Activated CD8-positive, alpha-beta T cell treated with anti-CD3 and anti-CD28 coated beads, Interleukin-2, amount 10 ng/mL, durations not matched to agents 7 days and 5 days (primary cell): ENCODE measurements at regions of chr2 and their contacts with region 1.

Region 1: GRCh38 chr2:134118279-134119116 is 135.4 kb upstream of the MGAT5 start:
- DNase-seq: peak; percentile 91
- ATAC-seq: peak; percentile 43
- H3K4me3 Mint-ChIP-seq: peak overlapping the region; percentile 98
- H3K27ac Mint-ChIP-seq: peak overlapping the region; percentile 4
- H3K4me1 Mint-ChIP-seq: peaks cover 36% of the 10 kb centered on the region
- H3K27me3 Mint-ChIP-seq: peaks cover 5% of the 10 kb centered on the region

Region 2: DNA sequence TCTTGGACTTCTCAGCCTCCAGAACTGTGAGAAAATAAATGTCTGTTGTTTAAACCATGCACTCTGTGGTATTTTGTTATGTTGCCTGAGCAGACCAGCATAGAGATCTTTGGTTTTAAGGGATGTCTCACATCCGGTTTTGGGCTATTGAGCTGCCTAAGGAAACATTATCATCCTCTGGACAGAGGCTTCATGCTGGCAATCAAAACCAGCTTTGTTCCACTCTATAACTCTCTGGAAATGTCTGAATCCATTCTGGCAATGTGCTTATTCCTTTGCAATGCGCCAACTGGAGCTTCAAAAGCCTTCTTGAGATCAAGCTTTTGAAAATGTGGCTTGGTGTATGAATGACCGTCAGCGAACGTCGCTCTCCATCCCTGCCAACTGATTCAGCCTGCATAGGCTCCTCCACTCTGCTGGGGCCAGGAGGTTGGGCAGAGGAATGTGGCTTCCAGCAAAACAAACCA is 48.2 kb before region 1 on chr2:
- CTCF ChIA-PET with region 1: no interaction called
- POLR2A ChIA-PET with region 1: no interaction called
- DNase-seq: no peak
- ATAC-seq: no peak
- H3K4me3 Mint-ChIP-seq: no peak overlapping the region
- H3K27ac Mint-ChIP-seq: no peak overlapping the region
- H3K4me1 Mint-ChIP-seq: no peaks in the 10 kb centered on the region
- H3K27me3 Mint-ChIP-seq: peaks cover 4% of the 10 kb centered on the region

Region 3: GRCh38 chr2:134080391-134081089 is 38.0 kb before region 1 on chr2:
- CTCF ChIA-PET with region 1: no interaction called
- POLR2A ChIA-PET with region 1: no interaction called
- DNase-seq: no peak
- ATAC-seq: no peak
- H3K4me3 Mint-ChIP-seq: no peak overlapping the region
- H3K27ac Mint-ChIP-seq: no peak overlapping the region
- H3K4me1 Mint-ChIP-seq: no peaks in the 10 kb centered on the region
- H3K27me3 Mint-ChIP-seq: peaks cover 9% of the 10 kb centered on the region

Region 4: GRCh38 chr2:134181210-134181609 is 62.7 kb after region 1 on chr2:
- CTCF ChIA-PET with region 1: interaction called, 11 read pairs
- POLR2A ChIA-PET with region 1: interaction called, 4 read pairs
- DNase-seq: peak; percentile 71
- ATAC-seq: peak; percentile 88
- H3K4me3 Mint-ChIP-seq: no peak overlapping the region
- H3K27ac Mint-ChIP-seq: peak overlapping the region; percentile 70
- H3K4me1 Mint-ChIP-seq: peaks cover 47% of the 10 kb centered on the region
- H3K27me3 Mint-ChIP-seq: no peaks in the 10 kb centered on the region

Region 5: DNA sequence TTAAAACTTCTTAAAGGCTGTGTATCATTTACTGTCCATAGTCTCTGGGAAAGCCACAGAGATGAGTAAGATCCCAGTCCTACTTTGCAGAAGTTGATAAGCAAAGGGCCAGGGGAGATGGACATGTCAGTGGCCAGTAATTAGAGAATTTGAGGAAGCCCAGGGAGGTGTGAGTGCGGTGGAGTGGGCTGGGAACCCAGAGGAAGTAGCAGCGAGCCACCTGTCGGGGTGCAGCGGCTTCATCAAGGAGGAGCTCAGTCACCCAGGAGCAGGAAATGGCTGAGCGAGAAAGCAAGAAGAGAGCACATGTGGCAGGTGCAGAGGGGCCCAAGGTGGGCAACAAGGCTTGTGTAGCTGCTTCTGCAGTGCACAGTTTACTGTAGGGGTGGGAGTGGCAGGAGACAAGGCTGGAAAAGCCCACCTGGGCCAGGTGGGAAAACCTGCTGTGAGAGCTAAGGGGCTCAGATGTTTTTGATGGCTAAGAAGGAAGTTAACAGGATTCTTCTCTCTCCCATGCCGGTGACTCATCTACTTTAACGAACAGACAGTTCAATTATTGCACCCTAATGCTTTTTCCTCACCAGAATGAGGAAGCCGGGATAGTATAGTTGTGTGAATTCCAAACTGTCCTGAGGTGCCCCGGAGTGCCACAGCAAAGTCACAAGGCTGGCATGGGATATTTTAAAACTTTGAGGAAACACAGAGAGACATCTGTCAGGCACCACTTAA is 100.6 kb after region 1 on chr2:
- CTCF ChIA-PET with region 1: interaction called, 40 read pairs
- POLR2A ChIA-PET with region 1: interaction called, 5 read pairs
- DNase-seq: peak; percentile 65
- ATAC-seq: peak; percentile 78
- H3K4me3 Mint-ChIP-seq: peak overlapping the region; percentile 40
- H3K27ac Mint-ChIP-seq: peak overlapping the region; percentile 85
- H3K4me1 Mint-ChIP-seq: peaks cover 49% of the 10 kb centered on the region
- H3K27me3 Mint-ChIP-seq: no peaks in the 10 kb centered on the region

Region 6: GRCh38 chr2:134253804-134254203 is 135.3 kb after region 1 on chr2 and contains the start of gene MGAT5:
- CTCF ChIA-PET with region 1: interaction called, 20 read pairs
- POLR2A ChIA-PET with region 1: no interaction called
- DNase-seq: no peak
- ATAC-seq: no peak
- H3K4me3 Mint-ChIP-seq: no peak within 1 kb of the TSS
- H3K27ac Mint-ChIP-seq: no peak within 1 kb of the TSS
- H3K4me1 Mint-ChIP-seq: peaks cover 93% of the 10 kb centered on the region
- H3K27me3 Mint-ChIP-seq: peaks cover 2% of the 10 kb centered on the region
- total RNA-seq, gene MGAT5: 48.5 to 54.3 TPM

Region 7: GRCh38 chr2:134402410-134402809 is 283.9 kb after region 1 on chr2:
- CTCF ChIA-PET with region 1: interaction called, 14 read pairs
- POLR2A ChIA-PET with region 1: no interaction called
- DNase-seq: no peak
- ATAC-seq: no peak
- H3K4me3 Mint-ChIP-seq: no peak overlapping the region
- H3K27ac Mint-ChIP-seq: no peak overlapping the region
- H3K4me1 Mint-ChIP-seq: peaks cover 2% of the 10 kb centered on the region
- H3K27me3 Mint-ChIP-seq: no peaks in the 10 kb centered on the region

Region 8: GRCh38 chr2:134453476-134453875 is 335.0 kb after region 1 on chr2:
- CTCF ChIA-PET with region 1: interaction called, 12 read pairs
- POLR2A ChIA-PET with region 1: interaction called, 3 read pairs
- DNase-seq: no peak
- ATAC-seq: no peak
- H3K4me3 Mint-ChIP-seq: no peak overlapping the region
- H3K27ac Mint-ChIP-seq: no peak overlapping the region
- H3K4me1 Mint-ChIP-seq: no peaks in the 10 kb centered on the region
- H3K27me3 Mint-ChIP-seq: no peaks in the 10 kb centered on the region